ENCODE measurements at regions of chr18 and their contacts with region 1.

Region 1: GRCh38 chr18:49858309-49859020 is 45.1 kb upstream of the ACAA2 start:
- H3K4me3 ChIP-seq: no peak overlapping the region
- H3K27ac ChIP-seq: no peak overlapping the region
- H3K4me1 ChIP-seq: peaks cover 4% of the 10 kb centered on the region
- CTCF ChIP-seq: peak; percentile 88

Region 2: DNA sequence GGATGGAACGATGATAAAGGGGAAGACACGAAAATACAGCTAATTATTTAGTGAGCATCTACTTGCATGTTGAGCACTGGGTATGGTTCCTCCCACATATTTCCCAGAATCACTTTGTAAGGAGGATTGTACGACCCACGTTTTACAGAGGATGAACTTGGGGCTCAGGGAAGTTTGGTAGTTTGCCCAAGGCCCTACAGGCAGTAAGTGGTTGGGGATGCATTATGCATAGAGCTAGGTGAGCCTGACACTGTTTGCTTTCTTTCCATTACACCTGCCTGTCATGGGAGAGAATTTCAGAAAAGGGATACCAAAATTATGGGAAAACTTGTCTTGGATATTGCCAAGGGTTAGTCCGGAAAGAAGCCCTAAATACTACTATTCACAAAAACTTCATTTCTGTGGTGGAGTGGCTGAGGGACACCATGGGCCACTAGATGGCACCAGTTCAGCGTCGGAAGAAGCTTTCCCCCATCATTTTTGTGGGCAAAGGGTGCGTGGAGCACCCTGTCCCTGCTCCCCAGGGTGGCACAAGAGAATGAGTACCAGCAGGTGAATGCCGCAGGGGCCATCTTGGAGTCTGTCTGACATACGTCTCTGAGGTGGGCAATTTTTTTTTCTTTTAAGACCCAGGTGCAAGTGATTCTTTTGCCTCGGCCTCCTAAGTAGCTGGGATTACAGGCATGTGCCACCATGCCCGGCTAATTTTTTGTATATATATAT is 347.9 kb before region 1 on chr18:
- CTCF ChIA-PET with region 1: interaction called, 169 read pairs
- POLR2A ChIA-PET with region 1: no interaction called
- H3K4me3 ChIP-seq: no peak overlapping the region
- H3K27ac ChIP-seq: no peak overlapping the region
- H3K4me1 ChIP-seq: no peaks in the 10 kb centered on the region
- CTCF ChIP-seq: peak; percentile 86

Region 3: GRCh38 chr18:49768051-49768391 is 90.4 kb before region 1 on chr18:
- CTCF ChIA-PET with region 1: interaction called, 15 read pairs
- POLR2A ChIA-PET with region 1: no interaction called
- H3K4me3 ChIP-seq: no peak overlapping the region
- H3K27ac ChIP-seq: no peak overlapping the region
- H3K4me1 ChIP-seq: no peaks in the 10 kb centered on the region
- CTCF ChIP-seq: peak; percentile 58

Region 4: GRCh38 chr18:49813319-49814146 is 44.9 kb before region 1 on chr18 and contains the start of gene ACAA2:
- CTCF ChIA-PET with region 1: interaction called, 7 read pairs
- POLR2A ChIA-PET with region 1: interaction called, 12 read pairs
- H3K4me3 ChIP-seq: peak within 1 kb of the TSS; percentile 76
- H3K27ac ChIP-seq: peak within 1 kb of the TSS; percentile 96
- H3K4me1 ChIP-seq: peaks cover 22% of the 10 kb centered on the region
- CTCF ChIP-seq: no peak